ENCODE measurements at regions of chr1 and their contacts with region 1.

Region 1: GRCh38 chr1:231376101-231376500 is 38.0 kb downstream of the SPRTN start:
- DNase-seq: peak; percentile 42
- H3K4me3 Mint-ChIP-seq: no peak overlapping the region
- H3K27ac Mint-ChIP-seq: no peak overlapping the region
- H3K4me1 Mint-ChIP-seq: peaks cover 10% of the 10 kb centered on the region
- H3K27me3 Mint-ChIP-seq: no peaks in the 10 kb centered on the region
- CTCF ChIP-seq: no peak

Region 2: DNA sequence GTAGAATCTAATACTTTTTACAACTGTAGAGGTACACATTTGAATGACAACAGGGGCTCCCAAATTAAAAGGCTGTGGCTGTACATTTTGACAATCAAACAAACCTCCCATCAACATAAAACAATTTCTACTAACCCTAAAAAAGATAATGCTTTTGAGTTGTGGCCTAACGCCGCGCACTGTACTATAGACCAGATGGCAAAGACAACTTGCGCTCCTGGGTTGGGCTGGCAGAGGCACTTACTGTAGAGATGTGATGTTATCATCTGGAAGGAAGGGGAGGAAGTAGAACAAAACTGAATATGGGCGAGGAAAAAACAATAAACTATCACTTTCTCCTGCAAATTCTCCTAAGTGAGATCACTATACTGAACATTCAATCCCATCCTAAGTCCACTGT is 11.9 kb before region 1 on chr1:
- CTCF ChIA-PET with region 1: interaction called, 7 read pairs
- POLR2A ChIA-PET with region 1: interaction called, 34 read pairs
- intact Hi-C with region 1: no loop called
- DNase-seq: no peak
- H3K4me3 Mint-ChIP-seq: no peak overlapping the region
- H3K27ac Mint-ChIP-seq: no peak overlapping the region
- H3K4me1 Mint-ChIP-seq: peaks cover 7% of the 10 kb centered on the region
- H3K27me3 Mint-ChIP-seq: no peaks in the 10 kb centered on the region
- CTCF ChIP-seq: no peak

Region 3: GRCh38 chr1:231465051-231465450 is 89.0 kb after region 1 on chr1:
- CTCF ChIA-PET with region 1: no interaction called
- POLR2A ChIA-PET with region 1: no interaction called
- intact Hi-C with region 1: no loop called
- DNase-seq: no peak
- H3K4me3 Mint-ChIP-seq: no peak overlapping the region
- H3K27ac Mint-ChIP-seq: no peak overlapping the region
- H3K4me1 Mint-ChIP-seq: no peaks in the 10 kb centered on the region
- H3K27me3 Mint-ChIP-seq: no peaks in the 10 kb centered on the region
- CTCF ChIP-seq: no peak

Measured in MCF 10A (cell line).